ENCODE measurements at regions of chr19 and their contacts with region 1.

Region 1: GRCh38 chr19:49904136-49904535 is 7.4 kb upstream of the IL4I1 start:
- DNase-seq: no peak
- H3K4me3 ChIP-seq: no peak overlapping the region
- H3K4me3 Mint-ChIP-seq: no peak overlapping the region
- H3K27ac Mint-ChIP-seq: no peak overlapping the region
- H3K4me1 ChIP-seq: no peaks in the 10 kb centered on the region
- H3K4me1 Mint-ChIP-seq: no peaks in the 10 kb centered on the region
- H3K27me3 ChIP-seq: no peaks in the 10 kb centered on the region
- H3K27me3 Mint-ChIP-seq: no peaks in the 10 kb centered on the region
- CTCF ChIP-seq: no peak

Region 2: DNA sequence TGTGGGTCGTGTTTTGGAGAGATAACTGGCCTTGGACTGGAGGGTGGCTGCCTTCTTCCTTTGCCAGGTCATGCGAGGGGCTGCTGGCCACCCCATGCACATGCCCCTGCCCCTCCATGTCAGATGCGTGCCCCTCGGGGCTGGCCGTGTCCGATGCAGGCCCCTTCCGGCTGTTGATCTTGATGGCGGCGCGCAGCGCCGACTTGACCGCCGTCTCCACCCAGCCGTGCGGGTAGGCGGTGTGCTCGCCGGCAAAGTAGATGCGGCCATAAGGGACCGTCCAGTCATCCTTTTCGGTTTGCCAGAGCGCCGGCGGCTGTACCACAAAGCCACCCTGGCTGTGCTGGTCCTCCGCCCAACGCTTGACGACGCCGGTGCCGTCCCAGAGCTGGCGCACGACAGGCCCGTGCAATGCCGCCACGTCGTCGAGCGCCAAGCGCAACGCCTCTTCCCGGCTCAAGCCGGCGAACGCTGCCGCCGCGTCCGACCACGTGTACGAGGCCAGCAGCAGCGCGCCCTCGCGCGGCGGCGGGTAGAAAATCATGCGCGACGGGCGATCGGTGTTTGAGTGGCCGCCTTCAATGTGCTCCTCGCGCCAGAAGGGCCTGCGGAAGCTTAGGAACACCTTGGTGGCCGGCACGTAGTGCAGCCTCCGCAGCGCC is 14.3 kb before region 1 on chr19:
- CTCF ChIA-PET with region 1: interaction called, 7 read pairs
- POLR2A ChIA-PET with region 1: no interaction called
- intact Hi-C with region 1: loop called (anchors 2 kb)
- DNase-seq: peak; percentile 90 to 94
- H3K4me3 ChIP-seq: peak overlapping the region; percentile 86
- H3K4me3 Mint-ChIP-seq: peak overlapping the region; percentile 89
- H3K27ac Mint-ChIP-seq: peak overlapping the region; percentile 85
- H3K4me1 ChIP-seq: peaks cover 12% of the 10 kb centered on the region
- H3K4me1 Mint-ChIP-seq: no peaks in the 10 kb centered on the region
- H3K27me3 ChIP-seq: no peaks in the 10 kb centered on the region
- H3K27me3 Mint-ChIP-seq: peaks cover 3% of the 10 kb centered on the region
- CTCF ChIP-seq: peak; percentile 81 to 88